ENCODE measurements at regions of chr5 and their contacts with region 1.

Region 1: GRCh38 chr5:102681407-102681983 is 73.6 kb upstream of the PAM start:
- DNase-seq: peak; percentile 85
- H3K4me3 ChIP-seq: no peak overlapping the region
- H3K27ac ChIP-seq: no peak overlapping the region
- H3K4me1 ChIP-seq: no peaks in the 10 kb centered on the region
- H3K27me3 ChIP-seq: peaks cover 4 to 8% of the 10 kb centered on the region in 2 experiments
- CTCF ChIP-seq: peak; percentile 83 to 86
- POLR2A ChIP-seq: no peak

Region 2: GRCh38 chr5:102583276-102584124 is 98.0 kb before region 1 on chr5:
- CTCF ChIA-PET with region 1: interaction called, 6 read pairs
- POLR2A ChIA-PET with region 1: no interaction called
- dilution Hi-C with region 1: no loop called
- intact Hi-C with region 1: loop called (anchors 5 kb)
- DNase-seq: peak; percentile 43
- H3K4me3 ChIP-seq: no peak overlapping the region
- H3K27ac ChIP-seq: no peak overlapping the region
- H3K4me1 ChIP-seq: no peaks in the 10 kb centered on the region
- H3K27me3 ChIP-seq: peaks cover 7 to 8% of the 10 kb centered on the region in 2 experiments
- CTCF ChIP-seq: no peak
- POLR2A ChIP-seq: no peak

Region 3: GRCh38 chr5:102755686-102756371 is 74.3 kb after region 1 on chr5:
- CTCF ChIA-PET with region 1: interaction called, 25 read pairs
- POLR2A ChIA-PET with region 1: no interaction called
- dilution Hi-C with region 1: no loop called
- intact Hi-C with region 1: loop called (anchors 2 kb)
- DNase-seq: peak; percentile 78
- H3K4me3 ChIP-seq: peak overlapping the region; percentile 73 to 90 (median 86)
- H3K27ac ChIP-seq: peak overlapping the region; percentile 81
- H3K4me1 ChIP-seq: peaks cover 15% of the 10 kb centered on the region
- H3K27me3 ChIP-seq: no peaks in the 10 kb centered on the region
- CTCF ChIP-seq: no peak
- POLR2A ChIP-seq: no peak

Region 4: GRCh38 chr5:102801371-102801770 is 119.9 kb after region 1 on chr5:
- CTCF ChIA-PET with region 1: interaction called, 15 read pairs
- POLR2A ChIA-PET with region 1: no interaction called
- dilution Hi-C with region 1: no loop called
- intact Hi-C with region 1: no loop called
- DNase-seq: no peak
- H3K4me3 ChIP-seq: no peak overlapping the region
- H3K27ac ChIP-seq: no peak overlapping the region
- H3K4me1 ChIP-seq: no peaks in the 10 kb centered on the region
- H3K27me3 ChIP-seq: no peaks in the 10 kb centered on the region
- CTCF ChIP-seq: no peak
- POLR2A ChIP-seq: no peak

Region 5: GRCh38 chr5:102971697-102972293 is 290.3 kb after region 1 on chr5:
- CTCF ChIA-PET with region 1: interaction called, 36 read pairs
- POLR2A ChIA-PET with region 1: no interaction called
- dilution Hi-C with region 1: no loop called
- intact Hi-C with region 1: loop called (anchors 2 kb)
- DNase-seq: peak; percentile 40
- H3K4me3 ChIP-seq: no peak overlapping the region
- H3K27ac ChIP-seq: no peak overlapping the region
- H3K4me1 ChIP-seq: peaks cover 28% of the 10 kb centered on the region
- H3K27me3 ChIP-seq: no peaks in the 10 kb centered on the region
- CTCF ChIP-seq: peak; percentile 27 to 29
- POLR2A ChIP-seq: no peak

Region 6: GRCh38 chr5:103139264-103139865 is 457.9 kb after region 1 on chr5:
- CTCF ChIA-PET with region 1: interaction called, 21 read pairs
- POLR2A ChIA-PET with region 1: no interaction called
- dilution Hi-C with region 1: no loop called
- intact Hi-C with region 1: loop called (anchors 1 kb)
- DNase-seq: peak; percentile 69
- H3K4me3 ChIP-seq: no peak overlapping the region
- H3K27ac ChIP-seq: no peak overlapping the region
- H3K4me1 ChIP-seq: no peaks in the 10 kb centered on the region
- H3K27me3 ChIP-seq: no peaks in the 10 kb centered on the region
- CTCF ChIP-seq: peak; percentile 82 to 89
- POLR2A ChIP-seq: no peak

Measured in endothelial cell of umbilical vein (primary cell).